CD8-positive, alpha-beta T cell (primary cell): ENCODE measurements at regions of chr14 and their contacts with region 1.

Region 1: DNA sequence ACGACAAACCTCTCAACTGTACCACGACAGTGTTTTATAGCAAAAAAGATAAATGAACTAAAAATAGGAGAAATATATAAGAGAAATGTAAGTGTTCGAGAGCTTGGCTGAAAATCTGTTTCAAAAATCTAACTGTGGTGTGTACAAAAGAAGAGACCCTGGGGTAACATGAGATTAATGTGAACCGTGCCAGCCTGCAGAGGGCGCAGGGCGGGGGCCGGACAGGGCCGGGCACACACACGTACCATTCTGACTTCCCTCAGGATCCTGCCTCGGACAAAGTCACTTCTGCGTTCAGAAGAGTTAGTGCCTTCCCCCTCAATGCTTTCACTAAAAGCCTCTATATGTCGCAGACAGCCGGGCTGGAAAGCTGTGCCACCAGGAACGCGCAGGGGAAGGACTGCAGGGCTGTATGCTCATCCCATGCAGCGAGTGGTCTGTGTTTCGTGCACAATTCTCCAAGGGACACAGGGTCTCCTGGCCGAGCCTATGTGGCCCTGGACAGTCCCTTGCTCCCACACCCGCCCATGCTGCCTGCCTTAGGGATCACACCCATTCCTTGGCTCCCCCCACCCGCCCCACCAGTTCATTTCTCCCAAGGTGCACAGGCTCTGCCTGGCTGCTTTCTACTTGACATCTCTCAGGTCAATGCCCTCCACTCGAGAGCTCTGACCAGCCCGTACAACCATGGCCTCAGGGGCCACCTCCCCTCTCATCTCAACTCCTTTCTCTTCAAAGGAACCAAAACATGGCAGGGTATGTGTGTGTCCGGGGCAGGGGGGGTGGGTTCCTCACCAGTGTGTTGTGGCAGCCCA is 8.5 kb downstream of the CDCA4 start:
- DNase-seq: no peak
- ATAC-seq: no peak
- H3K4me3 ChIP-seq: no peak overlapping the region
- H3K4me3 Mint-ChIP-seq: no peak overlapping the region
- H3K27ac ChIP-seq: no peak overlapping the region
- H3K27ac Mint-ChIP-seq: peak overlapping the region; percentile 37
- H3K4me1 ChIP-seq: no peaks in the 10 kb centered on the region
- H3K4me1 Mint-ChIP-seq: peaks cover 32% of the 10 kb centered on the region
- H3K27me3 ChIP-seq: no peaks in the 10 kb centered on the region
- H3K27me3 Mint-ChIP-seq: no peaks in the 10 kb centered on the region
- CTCF ChIP-seq: no peak

Region 2: DNA sequence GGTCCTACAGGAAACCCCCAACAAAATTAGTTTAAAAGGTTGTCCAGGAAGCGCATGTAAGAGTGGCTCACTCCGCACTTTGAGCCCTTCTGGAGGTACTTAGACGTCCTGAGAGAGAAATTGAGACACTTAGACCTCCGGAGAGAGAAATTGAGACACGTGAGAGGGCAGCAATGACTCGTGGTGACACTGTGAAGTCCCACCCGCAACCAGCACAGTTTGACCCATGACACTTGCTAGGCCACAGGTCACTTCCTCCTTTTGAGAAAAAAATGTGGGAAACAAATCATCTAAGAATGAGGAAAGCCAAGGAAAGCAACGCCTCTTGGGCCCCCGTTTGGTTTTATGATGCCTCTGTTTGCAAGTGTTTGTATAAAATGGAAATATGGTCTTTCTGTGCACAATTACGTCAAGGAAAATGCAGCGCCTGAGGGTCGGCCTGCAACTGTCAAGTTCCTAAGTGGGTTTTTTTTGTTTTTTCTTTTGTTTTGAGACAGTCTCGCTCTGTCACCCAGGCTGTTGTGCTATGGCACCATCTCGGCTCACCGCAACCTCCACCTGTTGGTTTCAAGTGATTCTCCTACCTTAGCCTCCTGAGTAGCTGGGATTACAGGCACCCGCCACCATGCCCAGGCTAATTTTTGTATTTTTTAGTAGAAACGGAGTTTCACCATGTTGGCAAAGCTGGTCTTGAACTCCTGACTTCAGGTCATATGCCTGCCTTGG is 22.1 kb after region 1 on chr14:
- CTCF ChIA-PET with region 1: interaction called, 3 read pairs
- POLR2A ChIA-PET with region 1: no interaction called
- intact Hi-C with region 1: loop called in 1 of 2 experiments (anchors 1 kb)
- DNase-seq: no peak
- ATAC-seq: no peak
- H3K4me3 ChIP-seq: no peak overlapping the region
- H3K4me3 Mint-ChIP-seq: peak overlapping the region; percentile 31
- H3K27ac ChIP-seq: no peak overlapping the region
- H3K27ac Mint-ChIP-seq: no peak overlapping the region
- H3K4me1 ChIP-seq: peaks cover 8% of the 10 kb centered on the region
- H3K4me1 Mint-ChIP-seq: peaks cover 13% of the 10 kb centered on the region
- H3K27me3 ChIP-seq: no peaks in the 10 kb centered on the region
- H3K27me3 Mint-ChIP-seq: no peaks in the 10 kb centered on the region
- CTCF ChIP-seq: no peak